ENCODE measurements at regions of chr10 and their contacts with region 1.

Region 1: GRCh38 chr10:99845837-99846382 is 63.5 kb downstream of the ABCC2 start:
- DNase-seq: peak; percentile 86
- H3K4me3 ChIP-seq: no peak overlapping the region
- H3K27ac ChIP-seq: no peak overlapping the region
- H3K4me1 ChIP-seq: no peaks in the 10 kb centered on the region
- H3K27me3 ChIP-seq: no peaks in the 10 kb centered on the region
- CTCF ChIP-seq: peak; percentile 90 to 98

Region 2: DNA sequence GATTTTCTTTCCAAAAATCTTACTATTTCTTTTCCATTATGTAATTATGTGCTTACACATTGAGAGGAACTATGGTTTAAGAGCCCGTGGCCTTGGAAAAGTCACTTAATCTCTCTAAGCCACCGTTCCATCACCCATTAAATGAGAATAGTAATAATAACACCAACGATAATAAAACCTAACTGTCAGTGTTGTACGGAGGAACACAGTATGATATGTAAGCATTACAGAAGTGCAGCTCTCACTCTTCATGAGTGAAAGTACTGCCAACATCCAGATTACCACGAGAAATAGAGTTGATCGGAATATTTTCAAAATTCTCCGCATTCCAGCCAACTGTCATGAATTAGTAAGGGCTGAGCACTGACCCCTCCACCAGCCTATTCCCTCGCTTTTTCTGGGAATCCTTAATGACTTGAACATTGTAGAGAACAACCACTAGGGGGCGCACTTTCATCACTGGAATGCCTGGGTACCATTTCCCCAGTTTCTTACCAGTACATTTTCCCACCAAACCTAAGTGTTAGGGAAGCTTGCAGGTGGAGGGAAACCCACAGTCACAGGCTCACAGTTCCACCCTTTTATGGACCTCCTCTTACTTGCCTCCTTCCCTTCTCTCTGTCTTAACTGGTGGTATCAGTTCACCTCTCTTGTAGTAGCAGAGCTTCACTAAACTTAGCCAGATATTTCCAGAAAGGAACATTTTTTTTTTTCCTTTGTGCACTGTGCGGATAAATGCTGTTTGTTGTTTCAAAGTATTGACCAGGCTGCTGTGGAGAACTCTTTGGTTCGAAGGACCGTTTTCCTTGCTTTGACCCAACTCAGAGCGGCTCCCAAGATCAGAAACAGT is 285.4 kb before region 1 on chr10:
- CTCF ChIA-PET with region 1: no interaction called
- dilution Hi-C with region 1: no loop called
- in situ Hi-C with region 1: no loop called
- intact Hi-C with region 1: loop called (anchors 10 kb)
- DNase-seq: peak; percentile 32
- H3K4me3 ChIP-seq: no peak overlapping the region
- H3K27ac ChIP-seq: no peak overlapping the region
- H3K4me1 ChIP-seq: peaks cover 4% of the 10 kb centered on the region
- H3K27me3 ChIP-seq: no peaks in the 10 kb centered on the region
- CTCF ChIP-seq: peak; percentile 78 to 80

Region 3: GRCh38 chr10:99966306-99966705 is 120.4 kb after region 1 on chr10:
- CTCF ChIA-PET with region 1: interaction called, 19 read pairs
- dilution Hi-C with region 1: no loop called
- in situ Hi-C with region 1: no loop called
- intact Hi-C with region 1: loop called (anchors 1 kb)
- DNase-seq: peak; percentile 95
- H3K4me3 ChIP-seq: no peak overlapping the region
- H3K27ac ChIP-seq: peak overlapping the region; percentile 53
- H3K4me1 ChIP-seq: peaks cover 43% of the 10 kb centered on the region
- H3K27me3 ChIP-seq: no peaks in the 10 kb centered on the region
- CTCF ChIP-seq: no peak

Region 4: DNA sequence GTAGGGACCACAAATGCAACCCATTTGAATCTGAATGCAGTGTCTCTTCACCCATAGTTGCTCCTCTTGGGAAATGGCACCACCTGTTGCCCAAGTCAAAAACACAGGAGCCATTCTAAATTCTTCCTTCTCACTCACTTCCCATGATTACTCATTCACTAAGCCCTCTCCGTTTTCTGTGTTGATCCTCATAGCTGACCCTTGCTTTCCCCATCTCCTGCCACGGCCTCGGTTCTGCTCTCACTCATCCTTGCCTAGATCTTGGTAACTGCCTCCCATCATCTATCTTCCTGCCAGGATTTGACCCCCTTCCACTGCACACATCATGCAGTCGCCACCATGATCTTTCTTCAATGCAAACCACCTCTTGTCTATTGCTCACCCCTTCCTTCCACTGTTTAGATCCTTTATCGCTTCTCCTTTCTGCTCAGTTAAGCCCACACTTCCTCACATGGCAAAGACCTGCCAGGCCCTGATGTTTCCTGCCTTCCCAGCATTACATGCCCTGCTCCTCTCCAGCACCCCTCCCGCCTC is 254.8 kb after region 1 on chr10:
- CTCF ChIA-PET with region 1: no interaction called
- dilution Hi-C with region 1: loop called (anchors 25 kb)
- in situ Hi-C with region 1: no loop called
- intact Hi-C with region 1: loop called (anchors 1 kb)
- DNase-seq: peak; percentile 25
- H3K4me3 ChIP-seq: no peak overlapping the region
- H3K27ac ChIP-seq: no peak overlapping the region
- H3K4me1 ChIP-seq: no peaks in the 10 kb centered on the region
- H3K27me3 ChIP-seq: peaks cover 1% of the 10 kb centered on the region
- CTCF ChIP-seq: peak; percentile 13 to 37

Region 5: GRCh38 chr10:100229819-100230422 is 384.0 kb after region 1 on chr10:
- CTCF ChIA-PET with region 1: no interaction called
- dilution Hi-C with region 1: loop called (anchors 25 kb)
- in situ Hi-C with region 1: no loop called
- intact Hi-C with region 1: loop called (anchors 2 kb)
- DNase-seq: no peak
- H3K4me3 ChIP-seq: peak overlapping the region; percentile 53 to 82 (median 77)
- H3K27ac ChIP-seq: peak overlapping the region; percentile 71
- H3K4me1 ChIP-seq: peaks cover 4% of the 10 kb centered on the region
- H3K27me3 ChIP-seq: no peaks in the 10 kb centered on the region
- CTCF ChIP-seq: no peak

Region 6: DNA sequence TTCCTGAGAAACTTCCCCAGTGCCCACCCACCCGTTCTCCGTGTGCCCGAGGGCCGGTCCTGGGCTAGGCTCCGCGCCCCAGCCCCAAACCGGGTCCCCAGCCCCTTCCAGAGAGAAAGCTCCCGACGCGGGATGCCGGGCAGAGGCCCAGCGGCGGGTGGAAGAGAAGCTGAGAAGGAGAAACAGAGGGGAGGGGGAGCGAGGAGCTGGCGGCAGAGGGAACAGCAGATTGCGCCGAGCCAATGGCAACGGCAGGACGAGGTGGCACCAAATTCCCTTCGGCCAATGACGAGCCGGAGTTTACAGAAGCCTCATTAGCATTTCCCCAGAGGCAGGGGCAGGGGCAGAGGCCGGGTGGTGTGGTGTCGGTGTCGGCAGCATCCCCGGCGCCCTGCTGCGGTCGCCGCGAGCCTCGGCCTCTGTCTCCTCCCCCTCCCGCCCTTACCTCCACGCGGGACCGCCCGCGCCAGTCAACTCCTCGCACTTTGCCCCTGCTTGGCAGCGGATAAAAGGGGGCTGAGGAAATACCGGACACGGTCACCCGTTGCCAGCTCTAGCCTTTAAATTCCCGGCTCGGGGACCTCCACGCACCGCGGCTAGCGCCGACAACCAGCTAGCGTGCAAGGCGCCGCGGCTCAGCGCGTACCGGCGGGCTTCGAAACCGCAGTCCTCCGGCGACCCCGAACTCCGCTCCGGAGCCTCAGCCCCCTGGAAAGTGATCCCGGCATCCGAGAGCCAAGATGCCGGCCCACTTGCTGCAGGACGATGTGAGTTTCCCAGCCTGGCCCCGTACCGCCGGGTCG is 501.1 kb after region 1 on chr10 and contains the start of gene SCD:
- CTCF ChIA-PET with region 1: no interaction called
- dilution Hi-C with region 1: no loop called
- in situ Hi-C with region 1: no loop called
- intact Hi-C with region 1: loop called (anchors 10 kb)
- DNase-seq: peak; percentile 95
- H3K4me3 ChIP-seq: peak within 1 kb of the TSS; percentile 83 to 96 (median 94)
- H3K27ac ChIP-seq: peak within 1 kb of the TSS; percentile 71
- H3K4me1 ChIP-seq: peaks cover 43% of the 10 kb centered on the region
- H3K27me3 ChIP-seq: no peaks in the 10 kb centered on the region
- CTCF ChIP-seq: no peak
- total RNA-seq, gene SCD: 348 to 939 TPM

Measured in mammary epithelial cell (primary cell).